ENCODE measurements at regions of chr10 and their contacts with region 1.

Region 1: DNA sequence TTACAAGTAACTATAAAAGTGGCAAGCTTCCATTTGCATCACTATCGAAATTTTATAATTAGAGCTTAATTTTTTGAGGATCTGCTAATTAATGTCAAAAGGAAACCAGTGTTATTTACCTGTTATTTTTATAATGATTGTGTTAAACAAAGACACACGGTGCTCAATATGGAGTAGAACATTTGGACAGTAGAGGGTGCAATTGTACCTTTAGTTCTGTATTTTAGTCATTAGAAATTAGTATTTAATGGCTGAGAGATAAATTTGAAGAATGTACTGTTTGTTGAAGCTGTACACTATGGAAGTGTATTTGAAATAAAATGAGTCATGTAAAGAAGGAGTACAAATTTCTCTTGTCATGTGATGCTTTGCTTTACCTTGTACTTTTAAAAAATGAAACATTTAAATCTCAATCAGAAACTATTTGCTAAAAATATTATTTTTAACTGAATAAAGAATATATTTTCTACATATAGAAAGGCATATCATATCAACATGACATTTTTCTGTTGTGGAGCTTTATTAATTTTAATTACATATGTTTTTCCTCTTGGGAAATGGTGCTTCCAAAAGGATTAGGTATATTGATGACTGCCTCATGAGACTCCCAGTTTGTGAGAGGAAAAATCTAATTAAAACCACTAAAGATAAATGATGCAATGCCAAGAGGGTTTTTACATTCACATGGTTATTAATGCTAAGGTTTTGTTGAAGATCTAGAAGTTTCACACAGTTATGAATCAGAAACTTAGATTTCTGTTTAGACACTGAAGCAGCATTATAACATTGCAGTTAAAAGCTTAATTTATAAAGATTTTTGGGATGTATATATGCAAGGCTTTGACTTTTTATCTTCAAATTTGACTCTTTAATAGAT is 10.4 kb upstream of the PRKG1 start:
- DNase-seq: peak; percentile 7
- ATAC-seq: peak; percentile 52; the same call in 2 of the 3 replicates
- H3K4me3 ChIP-seq: no peak overlapping the region
- H3K27ac ChIP-seq: no peak overlapping the region
- H3K4me1 ChIP-seq: no peaks in the 10 kb centered on the region
- H3K27me3 ChIP-seq: no peaks in the 10 kb centered on the region
- CTCF ChIP-seq: peak; percentile 52
- EP300 ChIP-seq: no peak
- POLR2A ChIP-seq: no peak
- RAD21 ChIP-seq: 0 out of 2 replicates have a peak, but pooled peaks have one; percentile 16

Region 2: GRCh38 chr10:50988792-50989191 is 75.1 kb before region 1 on chr10:
- CTCF ChIA-PET with region 1: no interaction called
- POLR2A ChIA-PET with region 1: no interaction called
- in situ Hi-C with region 1: no loop called
- intact Hi-C with region 1: no loop called
- DNase-seq: no peak
- ATAC-seq: no peak
- H3K4me3 ChIP-seq: no peak overlapping the region
- H3K27ac ChIP-seq: no peak overlapping the region
- H3K4me1 ChIP-seq: 0 out of 2 replicates have a peak, but pooled peaks cover 8% of the 10 kb centered on the region
- H3K27me3 ChIP-seq: peaks cover 6 to 38% of the 10 kb centered on the region in 2 experiments
- CTCF ChIP-seq: no peak
- EP300 ChIP-seq: no peak
- POLR2A ChIP-seq: no peak
- RAD21 ChIP-seq: no peak

Region 3: GRCh38 chr10:51422311-51423120 is 358.6 kb after region 1 on chr10:
- CTCF ChIA-PET with region 1: interaction called, 7 read pairs
- POLR2A ChIA-PET with region 1: no interaction called
- in situ Hi-C with region 1: loop called (anchors 10 kb)
- intact Hi-C with region 1: loop called (anchors 1 kb)
- DNase-seq: peak; percentile 15
- ATAC-seq: peak; percentile 80
- H3K4me3 ChIP-seq: no peak overlapping the region
- H3K27ac ChIP-seq: no peak overlapping the region
- H3K4me1 ChIP-seq: no peaks in the 10 kb centered on the region
- H3K27me3 ChIP-seq: no peaks in the 10 kb centered on the region
- CTCF ChIP-seq: peak; percentile 64
- EP300 ChIP-seq: no peak
- POLR2A ChIP-seq: no peak
- RAD21 ChIP-seq: no peak